Heart left ventricle (tissue), 16 donors: ENCODE measurements at regions of chr6 and their contacts with region 1.

Region 1: GRCh38 chr6:138115877-138116660 is 8.8 kb upstream of the PERP start:
- DNase-seq: peak; percentile 24 to 63 (median 50)
- ATAC-seq: peak; percentile 63 to 88 (median 85)
- H3K4me3 ChIP-seq: no peak overlapping the region
- H3K27ac ChIP-seq: no peak overlapping the region
- H3K4me1 ChIP-seq: peaks cover 0 to 6% (median 0%) of the 10 kb centered on the region in 12 donors
- H3K27me3 ChIP-seq: peaks cover 0 to 10% (median 0%) of the 10 kb centered on the region in 9 donors
- CTCF ChIP-seq: peak; percentile 66 to 85 (median 74)
- POLR2A ChIP-seq: no peak

Region 2: DNA sequence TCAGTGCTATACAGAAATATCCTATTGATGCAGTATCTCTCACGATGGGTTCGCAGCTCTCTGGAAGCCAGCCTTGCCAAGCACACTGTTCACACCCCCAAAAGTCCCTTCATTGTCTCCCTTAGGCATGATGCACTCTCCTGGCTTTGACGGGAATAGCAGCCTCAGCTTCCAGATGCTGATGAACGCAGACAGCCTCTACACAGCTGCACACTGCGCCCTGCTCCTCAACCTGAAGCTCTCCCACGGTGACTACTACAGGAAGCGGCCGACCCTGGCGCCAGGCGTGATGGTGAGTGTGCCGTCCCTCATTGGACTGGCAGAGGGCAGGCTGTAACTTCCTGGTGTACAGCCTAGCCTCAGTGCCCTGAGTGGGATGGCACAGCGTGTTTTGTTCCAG is 162.3 kb after region 1 on chr6:
- intact Hi-C with region 1: loop called in 8 of 10 experiments (anchors 2 to 5 kb)
- DNase-seq: peak in 2 of 5 donors; percentile 8 to 30
- ATAC-seq: peak in 3 of 4 donors; percentile 56 to 79 (median 72)
- H3K4me3 ChIP-seq: no peak overlapping the region
- H3K27ac ChIP-seq: no peak overlapping the region
- H3K4me1 ChIP-seq: no peaks in the 10 kb centered on the region
- H3K27me3 ChIP-seq: no peaks in the 10 kb centered on the region
- CTCF ChIP-seq: peak in 10 of 12 donors; percentile 13 to 53 (median 40)
- POLR2A ChIP-seq: no peak

Region 3: GRCh38 chr6:138403801-138404661 is 288.0 kb after region 1 on chr6 and contains the start of gene HEBP2:
- intact Hi-C with region 1: loop called in 8 of 10 experiments (anchors 1 to 10 kb)
- DNase-seq: peak; percentile 95 to 97 (median 97)
- ATAC-seq: peak; percentile 94 to 96 (median 95)
- H3K4me3 ChIP-seq: peak within 1 kb of the TSS; percentile 71 to 92 (median 83)
- H3K27ac ChIP-seq: peak within 1 kb of the TSS; percentile 78 to 98 (median 96)
- H3K4me1 ChIP-seq: peaks cover 0 to 27% (median 14%) of the 10 kb centered on the region in 12 donors
- H3K27me3 ChIP-seq: no peaks in the 10 kb centered on the region
- CTCF ChIP-seq: peak; percentile 47 to 85 (median 75)
- POLR2A ChIP-seq: peak; percentile 12 to 84
- total RNA-seq, gene HEBP2: 45.1 to 110 (median 92.6) TPM

Region 4: GRCh38 chr6:138509371-138509770 is 393.3 kb after region 1 on chr6:
- intact Hi-C with region 1: loop called in 6 of 10 experiments (anchors 5 to 10 kb)
- DNase-seq: peak in 1 of 5 donors; percentile 16
- ATAC-seq: peak in 3 of 4 donors; percentile 52 to 76 (median 64)
- H3K4me3 ChIP-seq: no peak overlapping the region
- H3K27ac ChIP-seq: no peak overlapping the region
- H3K4me1 ChIP-seq: peaks cover 0 to 17% (median 0%) of the 10 kb centered on the region in 12 donors
- H3K27me3 ChIP-seq: no peaks in the 10 kb centered on the region
- CTCF ChIP-seq: peak; percentile 33 to 61 (median 55)
- POLR2A ChIP-seq: no peak

Region 5: GRCh38 chr6:138588805-138589434 is 472.9 kb after region 1 on chr6:
- intact Hi-C with region 1: loop called (anchors 2 to 10 kb)
- DNase-seq: peak in 4 of 5 donors; percentile 46 to 60 (median 59)
- ATAC-seq: peak in 3 of 4 donors; percentile 32 to 58 (median 49)
- H3K4me3 ChIP-seq: no peak overlapping the region
- H3K27ac ChIP-seq: no peak overlapping the region
- H3K4me1 ChIP-seq: peaks cover 0 to 27% (median 10%) of the 10 kb centered on the region in 12 donors
- H3K27me3 ChIP-seq: no peaks in the 10 kb centered on the region
- CTCF ChIP-seq: peak; percentile 79 to 96 (median 92)
- POLR2A ChIP-seq: no peak